ENCODE measurements at regions of chr9 and their contacts with region 1.

Region 1: DNA sequence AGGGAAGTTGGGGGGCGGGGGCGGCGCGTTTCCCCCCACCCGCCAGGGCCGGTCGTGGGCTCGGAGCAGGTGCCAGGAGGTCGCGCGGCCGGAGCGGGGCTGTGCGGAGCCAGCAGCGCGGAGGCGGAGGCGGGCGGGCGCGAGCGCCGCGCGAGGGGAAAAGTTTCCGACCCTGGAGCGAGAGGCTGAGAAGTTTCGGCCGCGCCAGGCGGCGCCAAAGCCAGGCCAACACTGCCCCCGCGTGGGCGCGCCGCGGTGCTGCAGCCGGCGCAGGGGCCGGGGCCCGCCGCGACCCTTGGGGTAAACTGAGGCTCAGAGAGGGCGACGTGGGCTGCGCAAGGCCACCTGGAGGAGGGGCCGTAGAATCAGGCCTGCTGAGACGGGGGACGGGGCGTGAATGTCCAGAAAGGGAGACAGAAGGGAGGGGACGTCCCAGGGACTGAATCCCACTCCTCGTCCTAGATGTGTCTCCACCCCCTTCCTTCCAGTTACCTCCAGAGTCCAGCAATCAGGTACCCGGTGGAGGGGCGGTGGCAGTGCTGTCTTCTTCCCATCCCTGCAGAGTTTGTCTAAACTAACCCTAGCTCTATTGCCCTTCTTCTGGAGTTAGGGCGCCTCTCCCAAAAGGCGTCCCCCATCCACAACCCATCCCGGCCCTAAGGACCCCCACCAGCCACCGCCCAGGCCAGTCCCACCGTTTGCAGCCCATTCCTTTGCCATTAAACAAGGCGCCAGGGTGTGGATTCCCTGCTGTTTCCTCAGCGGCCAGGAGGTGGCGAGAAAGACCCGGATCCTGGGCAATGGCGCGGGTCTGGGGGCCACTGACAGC is 10.2 kb downstream of the C9orf50 start:
- DNase-seq: no peak
- H3K4me3 ChIP-seq: peak overlapping the region; percentile 58 to 79 (median 73)
- H3K27ac ChIP-seq: peak overlapping the region; percentile 89 to 94 (median 92)
- H3K4me1 ChIP-seq: peaks cover 30 to 59% (median 40%) of the 10 kb centered on the region in 3 donors
- H3K27me3 ChIP-seq: peaks cover 0 to 23% (median 0%) of the 10 kb centered on the region in 4 donors
- CTCF ChIP-seq: peak; percentile 65 to 100 (median 100)
- POLR2A ChIP-seq: no peak

Region 2: GRCh38 chr9:129139993-129140396 is 470.7 kb before region 1 on chr9:
- intact Hi-C with region 1: loop called (anchors 5 kb)
- DNase-seq: peak; percentile 81
- H3K4me3 ChIP-seq: peak overlapping the region; percentile 32 to 63 (median 46)
- H3K27ac ChIP-seq: peak overlapping the region; percentile 97 to 99 (median 99)
- H3K4me1 ChIP-seq: peaks cover 57 to 79% (median 63%) of the 10 kb centered on the region in 3 donors
- H3K27me3 ChIP-seq: no peaks in the 10 kb centered on the region
- CTCF ChIP-seq: peak in 1 of 6 experiments; percentile 16
- POLR2A ChIP-seq: peak in 2 of 4 donors; percentile 14 to 65

Region 3: GRCh38 chr9:129177791-129178559 is 432.7 kb before region 1 on chr9 and contains the start of gene IER5L:
- intact Hi-C with region 1: loop called (anchors 5 kb)
- DNase-seq: peak; percentile 76
- H3K4me3 ChIP-seq: peak within 1 kb of the TSS; percentile 75 to 83 (median 82)
- H3K27ac ChIP-seq: peak within 1 kb of the TSS; percentile 96 to 100 (median 98)
- H3K4me1 ChIP-seq: peaks cover 21 to 46% (median 25%) of the 10 kb centered on the region in 3 donors
- H3K27me3 ChIP-seq: peaks cover 0 to 5% (median 0%) of the 10 kb centered on the region in 4 donors
- CTCF ChIP-seq: peak in 2 of 6 experiments; percentile 12 to 19
- POLR2A ChIP-seq: peak in 3 of 4 donors; percentile 64 to 98 (median 95)
- total RNA-seq, gene IER5L: 6.1 to 8.7 (median 7.2) TPM

Region 4: DNA sequence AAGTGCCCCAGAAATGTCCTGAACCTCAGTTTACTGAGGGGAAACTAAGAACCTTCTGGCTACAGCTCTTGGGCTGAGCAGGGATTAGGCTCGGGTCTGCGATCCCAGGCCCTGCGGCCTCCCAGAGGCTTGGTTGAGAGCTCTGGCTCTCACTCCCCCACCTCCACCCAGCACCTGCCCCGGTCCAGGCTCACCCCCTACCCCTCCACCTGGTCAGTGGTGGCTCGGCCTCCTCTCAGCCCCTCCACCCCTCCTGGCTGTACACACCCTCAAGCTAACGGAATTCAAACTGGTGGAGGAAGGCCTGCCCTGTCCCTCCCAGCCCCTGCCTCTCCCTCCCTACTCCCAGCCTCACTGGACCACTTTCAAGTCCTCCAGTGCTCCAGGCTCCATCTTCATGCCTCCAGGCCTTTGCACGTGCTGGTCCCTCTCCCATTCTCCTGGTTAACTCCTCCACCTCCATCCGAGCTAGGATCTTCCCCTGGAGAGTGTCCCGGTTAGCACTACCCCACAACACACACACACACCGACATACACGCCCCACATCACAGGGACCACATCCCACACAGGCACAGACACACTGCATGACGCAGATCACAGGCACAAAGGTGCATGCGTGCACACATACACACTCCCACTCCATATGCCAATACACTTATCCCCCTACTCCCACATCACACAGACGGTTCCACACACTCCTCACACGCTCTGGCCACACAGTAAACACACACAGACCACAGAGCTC is 120.7 kb before region 1 on chr9:
- intact Hi-C with region 1: loop called (anchors 5 kb)
- DNase-seq: no peak
- H3K4me3 ChIP-seq: peak overlapping the region; percentile 45 to 68 (median 58)
- H3K27ac ChIP-seq: peak overlapping the region; percentile 97 to 100 (median 98)
- H3K4me1 ChIP-seq: peaks cover 68 to 100% (median 68%) of the 10 kb centered on the region in 3 donors
- H3K27me3 ChIP-seq: no peaks in the 10 kb centered on the region
- CTCF ChIP-seq: no peak
- POLR2A ChIP-seq: no peak

Measured in esophagus squamous epithelium (tissue), 5 donors.